ENCODE measurements at regions of chr19 and their contacts with region 1.

Region 1: GRCh38 chr19:52734893-52735661 is at the start of gene ZNF611:
- DNase-seq: peak; percentile 98 to 99 (median 98)
- ATAC-seq: peak; percentile 98 to 99 (median 99)
- H3K4me3 ChIP-seq: peak within 1 kb of the TSS; percentile 61 to 95 (median 82)
- H3K27ac ChIP-seq: peak within 1 kb of the TSS; percentile 73 to 96 (median 90)
- H3K4me1 ChIP-seq: peaks cover 0 to 30% (median 11%) of the 10 kb centered on the region in 12 donors
- H3K27me3 ChIP-seq: no peaks in the 10 kb centered on the region
- CTCF ChIP-seq: peak; percentile 43 to 85 (median 66)
- POLR2A ChIP-seq: peak; percentile 33 to 91
- total RNA-seq, gene ZNF611: 3.8 to 12.6 (median 6.9) TPM

Region 2: GRCh38 chr19:52601025-52601973 is 133.8 kb before region 1 on chr19:
- intact Hi-C with region 1: loop called in 1 of 10 experiments (anchors 5 kb)
- DNase-seq: peak; percentile 94 to 97 (median 95)
- ATAC-seq: peak; percentile 95 to 99 (median 99)
- H3K4me3 ChIP-seq: peak overlapping the region; percentile 43 to 80 (median 68)
- H3K27ac ChIP-seq: peak overlapping the region in 11 of 12 donors; percentile 32 to 74 (median 66)
- H3K4me1 ChIP-seq: peaks cover 0 to 19% (median 12%) of the 10 kb centered on the region in 12 donors
- H3K27me3 ChIP-seq: no peaks in the 10 kb centered on the region
- CTCF ChIP-seq: peak in 11 of 12 donors; percentile 24 to 65 (median 46)
- POLR2A ChIP-seq: peak in 1 of 2 donors; percentile 25

Region 3: GRCh38 chr19:52637718-52638585 is 97.1 kb before region 1 on chr19 and contains the start of gene ZNF83:
- intact Hi-C with region 1: loop called in 2 of 10 experiments (anchors 1 to 5 kb)
- DNase-seq: peak; percentile 96 to 99 (median 97)
- ATAC-seq: peak; percentile 99
- H3K4me3 ChIP-seq: peak within 1 kb of the TSS; percentile 50 to 97 (median 74)
- H3K27ac ChIP-seq: peak within 1 kb of the TSS; percentile 55 to 92 (median 86)
- H3K4me1 ChIP-seq: peaks cover 0 to 22% (median 11%) of the 10 kb centered on the region in 12 donors
- H3K27me3 ChIP-seq: no peaks in the 10 kb centered on the region
- CTCF ChIP-seq: no peak
- POLR2A ChIP-seq: peak in 1 of 2 donors; percentile 60
- total RNA-seq, gene ZNF83: 9.5 to 23.4 (median 18.4) TPM

Region 4: DNA sequence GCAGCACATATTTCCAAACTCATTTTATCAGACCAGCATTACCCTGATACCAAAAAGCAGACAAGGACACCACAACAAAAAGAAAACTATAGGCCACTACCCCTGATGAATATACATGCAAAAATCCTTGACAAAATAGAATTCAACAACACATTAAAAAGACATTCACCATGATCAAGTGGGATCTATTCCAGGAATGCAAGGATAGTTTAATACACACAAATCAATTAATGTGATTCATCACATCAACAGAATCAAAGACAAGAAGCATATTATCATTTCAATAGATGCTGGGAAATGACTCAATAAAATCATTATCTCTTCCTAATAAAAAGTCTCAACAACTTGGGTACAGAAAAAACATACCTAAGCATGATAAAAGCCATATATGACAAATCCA is 412.6 kb after region 1 on chr19:
- intact Hi-C with region 1: no loop called
- DNase-seq: no peak
- ATAC-seq: no peak
- H3K4me3 ChIP-seq: no peak overlapping the region
- H3K27ac ChIP-seq: no peak overlapping the region
- H3K4me1 ChIP-seq: no peaks in the 10 kb centered on the region
- H3K27me3 ChIP-seq: no peaks in the 10 kb centered on the region
- CTCF ChIP-seq: no peak
- POLR2A ChIP-seq: no peak